Endothelial cell of umbilical vein (primary cell): ENCODE measurements at regions of chr20 and their contacts with region 1.

Region 1: GRCh38 chr20:645318-646106 is 7.5 kb downstream of the SRXN1 start:
- DNase-seq: peak; percentile 80
- H3K4me3 ChIP-seq: no peak overlapping the region
- H3K27ac ChIP-seq: no peak overlapping the region
- H3K4me1 ChIP-seq: no peaks in the 10 kb centered on the region
- H3K27me3 ChIP-seq: no peaks in the 10 kb centered on the region
- CTCF ChIP-seq: peak; percentile 94 to 98
- POLR2A ChIP-seq: peak; percentile 38

Region 2: GRCh38 chr20:543369-544152 is 102.0 kb before region 1 on chr20 and contains the start of gene CSNK2A1:
- CTCF ChIA-PET with region 1: interaction called, 24 read pairs
- POLR2A ChIA-PET with region 1: no interaction called
- dilution Hi-C with region 1: no loop called
- intact Hi-C with region 1: no loop called
- DNase-seq: peak; percentile 97
- H3K4me3 ChIP-seq: peak within 1 kb of the TSS; percentile 76 to 100 (median 93)
- H3K27ac ChIP-seq: peak within 1 kb of the TSS; percentile 89
- H3K4me1 ChIP-seq: peaks cover 28% of the 10 kb centered on the region
- H3K27me3 ChIP-seq: peaks cover 6 to 8% of the 10 kb centered on the region in 2 experiments
- CTCF ChIP-seq: no peak
- POLR2A ChIP-seq: peak; percentile 86
- total RNA-seq, gene CSNK2A1: 134 and 142 TPM in 2 replicates

Region 3: DNA sequence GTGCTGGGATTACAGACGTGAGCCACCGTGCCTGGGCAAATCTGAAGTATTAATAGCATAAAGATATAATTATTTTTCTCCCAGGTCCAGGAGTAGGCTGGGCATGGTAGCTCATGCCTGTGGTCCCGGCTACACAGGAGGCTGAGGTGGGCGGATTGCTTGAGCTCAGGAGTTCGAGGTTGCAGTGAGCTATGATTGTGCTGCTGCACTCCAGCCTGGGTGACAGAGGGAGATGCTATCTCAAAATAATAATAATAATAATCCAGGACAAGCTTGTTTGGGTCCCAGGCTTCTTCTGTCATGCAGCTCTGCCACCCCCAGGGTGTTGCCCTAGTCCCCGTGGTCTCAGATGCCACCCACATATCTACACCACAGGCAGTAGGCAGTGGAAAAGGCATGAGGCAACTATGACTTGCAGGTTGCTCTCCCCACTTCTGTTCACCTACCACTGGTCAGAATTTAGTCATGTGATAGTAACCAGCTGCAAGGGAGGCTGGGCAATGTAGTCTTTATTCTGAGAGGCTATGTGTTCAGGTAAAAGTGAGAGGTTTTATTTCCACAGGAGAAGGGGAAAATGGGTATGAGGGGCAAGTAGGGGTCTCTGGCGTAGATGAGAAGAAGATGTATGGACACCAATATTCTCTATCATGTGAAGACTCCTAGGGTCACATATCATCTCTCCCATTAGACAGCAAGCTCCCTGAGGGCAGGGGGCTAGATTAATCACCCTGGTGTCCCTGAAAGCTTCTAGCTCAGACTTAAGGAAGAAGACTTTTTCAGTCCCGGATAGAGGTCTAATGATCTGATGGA is 61.1 kb before region 1 on chr20:
- CTCF ChIA-PET with region 1: interaction called, 10 read pairs
- POLR2A ChIA-PET with region 1: no interaction called
- dilution Hi-C with region 1: no loop called
- intact Hi-C with region 1: no loop called
- DNase-seq: no peak
- H3K4me3 ChIP-seq: no peak overlapping the region
- H3K27ac ChIP-seq: no peak overlapping the region
- H3K4me1 ChIP-seq: no peaks in the 10 kb centered on the region
- H3K27me3 ChIP-seq: peaks cover 2 to 8% of the 10 kb centered on the region in 2 experiments
- CTCF ChIP-seq: no peak
- POLR2A ChIP-seq: no peak

Region 4: DNA sequence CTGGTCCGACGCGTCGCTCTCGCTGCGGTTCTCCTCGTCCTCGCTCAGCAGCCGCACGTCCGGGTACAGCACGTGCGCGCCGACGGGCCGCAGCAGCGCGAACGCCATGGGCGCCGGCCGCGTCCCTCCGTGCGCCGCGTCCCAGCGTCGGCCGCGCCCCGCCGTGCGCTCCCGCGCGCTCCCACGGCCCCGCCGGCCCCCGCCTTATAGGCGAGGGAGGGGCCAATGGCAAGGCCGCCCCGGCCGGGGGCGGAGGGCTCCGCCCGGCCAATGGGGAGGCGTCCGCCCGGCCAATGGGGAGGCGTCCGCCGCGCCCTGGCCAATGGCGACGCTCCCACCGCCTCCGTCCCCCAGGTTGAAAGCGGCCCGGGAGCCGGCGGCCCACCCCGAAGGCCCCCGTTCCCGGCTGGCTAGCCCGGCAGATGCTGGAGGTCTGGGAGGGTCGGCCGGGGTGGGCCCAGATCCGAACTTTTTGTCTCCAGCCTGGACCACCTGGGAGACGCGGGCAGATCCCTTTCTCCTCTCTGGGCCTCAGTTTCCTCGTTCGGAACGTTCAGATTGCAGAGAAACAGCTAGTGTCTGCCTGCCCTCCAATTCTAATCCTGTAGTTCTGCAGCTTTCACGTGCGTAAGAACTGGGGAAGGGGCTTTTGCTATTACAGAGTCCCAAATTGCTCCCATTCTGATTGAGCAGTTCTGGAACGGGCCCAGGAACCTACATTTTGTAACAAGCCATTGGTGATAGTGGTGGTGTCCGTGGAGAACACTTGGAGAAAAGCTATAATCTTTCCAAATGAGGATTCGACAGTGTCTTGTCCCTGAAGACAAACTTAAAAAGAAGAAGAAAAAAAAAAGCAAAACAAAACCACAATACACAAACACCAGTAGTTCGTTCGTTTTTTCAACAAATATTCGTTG is 35.1 kb before region 1 on chr20 and contains the start of gene TCF15:
- CTCF ChIA-PET with region 1: interaction called, 14 read pairs
- POLR2A ChIA-PET with region 1: no interaction called
- dilution Hi-C with region 1: no loop called
- intact Hi-C with region 1: no loop called
- DNase-seq: peak; percentile 34
- H3K4me3 ChIP-seq: no peak within 1 kb of the TSS
- H3K27ac ChIP-seq: no peak within 1 kb of the TSS
- H3K4me1 ChIP-seq: peaks cover 6% of the 10 kb centered on the region
- H3K27me3 ChIP-seq: peaks cover 37 to 50% of the 10 kb centered on the region in 2 experiments
- CTCF ChIP-seq: no peak
- POLR2A ChIP-seq: no peak
- total RNA-seq, gene TCF15: 1.3 TPM in 1 of 2 replicates, not detected in the other

Region 5: GRCh38 chr20:667391-667964 is 22.0 kb after region 1 on chr20:
- CTCF ChIA-PET with region 1: interaction called, 33 read pairs
- POLR2A ChIA-PET with region 1: interaction called, 13 read pairs
- dilution Hi-C with region 1: no loop called
- intact Hi-C with region 1: no loop called
- DNase-seq: peak; percentile 46
- H3K4me3 ChIP-seq: no peak overlapping the region
- H3K27ac ChIP-seq: no peak overlapping the region
- H3K4me1 ChIP-seq: no peaks in the 10 kb centered on the region
- H3K27me3 ChIP-seq: peaks cover 38 to 48% of the 10 kb centered on the region in 2 experiments
- CTCF ChIP-seq: peak; percentile 91 to 92
- POLR2A ChIP-seq: no peak